Dorsolateral prefrontal cortex (tissue), 120 donors: ENCODE measurements at regions of chr14 and their contacts with region 1.

Region 1: DNA sequence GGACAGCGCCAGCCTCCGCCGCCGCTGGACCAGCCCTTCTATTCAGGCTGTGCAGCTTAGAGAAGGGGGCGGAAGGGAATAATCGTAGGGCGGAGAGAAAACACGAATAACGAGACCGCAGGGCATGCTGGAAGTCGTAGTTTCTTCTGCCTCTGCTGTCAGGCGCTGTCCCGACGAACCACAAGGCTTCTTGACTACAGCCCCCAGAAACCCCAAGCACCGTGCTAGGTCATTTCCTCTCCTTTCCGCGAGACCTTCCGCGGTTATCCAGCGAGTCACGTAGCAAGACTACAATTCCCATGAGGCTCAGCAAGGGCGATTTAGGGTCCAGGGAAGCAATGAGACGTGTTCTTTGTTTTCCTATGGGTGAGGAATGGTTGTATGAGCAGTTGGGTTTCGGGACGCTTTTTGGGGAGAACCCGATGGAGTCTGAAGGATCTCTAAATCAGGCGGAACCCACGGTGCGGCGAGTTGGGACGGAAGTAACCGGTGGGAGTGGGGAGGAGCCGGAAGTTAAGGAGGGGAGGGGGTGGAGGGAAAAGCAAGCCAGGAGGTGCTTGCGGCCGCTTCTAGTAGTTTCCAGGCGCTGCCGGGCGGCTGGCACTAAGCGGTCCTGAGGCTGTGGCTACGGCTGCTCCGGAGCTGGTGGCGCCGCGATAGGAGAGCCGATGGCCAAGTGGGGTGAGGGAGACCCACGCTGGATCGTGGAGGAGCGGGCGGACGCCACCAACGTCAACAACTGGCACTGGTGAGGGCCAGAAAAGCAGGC is at the starts of genes AHSA1 and VIPAS39:
- DNase-seq: peak; percentile 86 to 99 (median 98)
- H3K4me3 ChIP-seq: peak within 1 kb of the TSS; percentile 66 to 100 (median 98)
- H3K27ac ChIP-seq: peak within 1 kb of the TSS; percentile 80 to 100 (median 99)
- H3K27me3 ChIP-seq: no peaks in the 10 kb centered on the region
- CTCF ChIP-seq: peak in 27 of 56 donors; percentile 4 to 53 (median 18)
- total RNA-seq, gene AHSA1: 95.6 to 479 (median 192) TPM
- total RNA-seq, gene VIPAS39: 13.2 to 25.2 (median 19.5) TPM

Region 2: GRCh38 chr14:77151918-77152588 is 305.7 kb before region 1 on chr14:
- intact Hi-C with region 1: loop called (anchors 5 to 10 kb)
- DNase-seq: no peak
- H3K4me3 ChIP-seq: no peak overlapping the region
- H3K27ac ChIP-seq: peak overlapping the region in 12 of 59 donors; percentile 0 to 63 (median 26)
- H3K27me3 ChIP-seq: no peaks in the 10 kb centered on the region
- CTCF ChIP-seq: peak in 53 of 56 donors; percentile 28 to 67 (median 48)

Region 3: DNA sequence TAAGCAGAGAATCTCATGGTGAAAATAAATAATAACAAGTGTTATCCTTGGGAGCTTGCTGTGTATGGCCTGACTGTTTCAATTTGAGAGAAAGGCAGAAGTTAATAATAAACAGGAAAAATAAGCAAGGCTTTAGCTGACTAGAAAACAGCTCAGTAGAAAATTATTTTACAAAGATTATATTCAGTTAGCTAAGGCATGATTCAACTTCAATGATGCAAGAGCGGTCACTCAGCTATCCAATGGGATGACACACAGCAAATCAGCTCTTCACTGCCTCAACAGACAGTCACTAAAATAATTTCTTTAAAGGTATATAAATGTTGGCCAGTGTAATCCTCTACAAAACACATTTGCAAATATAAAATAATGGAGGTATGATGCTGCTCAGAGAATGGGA is 118.3 kb before region 1 on chr14:
- intact Hi-C with region 1: loop called in 1 of 2 experiments (anchors 5 kb)
- DNase-seq: no peak
- H3K4me3 ChIP-seq: no peak overlapping the region
- H3K27ac ChIP-seq: no peak overlapping the region
- H3K27me3 ChIP-seq: no peaks in the 10 kb centered on the region
- CTCF ChIP-seq: no peak

Region 4: GRCh38 chr14:77376771-77377501 is 80.8 kb before region 1 on chr14 and contains the starts of genes SAMD15 and TMED8:
- intact Hi-C with region 1: loop called in 1 of 2 experiments (anchors 2 kb)
- DNase-seq: peak; percentile 69 to 89 (median 82)
- H3K4me3 ChIP-seq: peak within 1 kb of the TSS; percentile 61 to 100 (median 88)
- H3K27ac ChIP-seq: peak within 1 kb of the TSS in 57 of 59 donors; percentile 30 to 95 (median 85)
- H3K27me3 ChIP-seq: no peaks in the 10 kb centered on the region
- CTCF ChIP-seq: peak in 55 of 56 donors; percentile 14 to 68 (median 50)
- total RNA-seq, gene SAMD15: 0.95 to 8.0 (median 3.0) TPM
- total RNA-seq, gene TMED8: 15.9 to 37.9 (median 28.6) TPM

Region 5: DNA sequence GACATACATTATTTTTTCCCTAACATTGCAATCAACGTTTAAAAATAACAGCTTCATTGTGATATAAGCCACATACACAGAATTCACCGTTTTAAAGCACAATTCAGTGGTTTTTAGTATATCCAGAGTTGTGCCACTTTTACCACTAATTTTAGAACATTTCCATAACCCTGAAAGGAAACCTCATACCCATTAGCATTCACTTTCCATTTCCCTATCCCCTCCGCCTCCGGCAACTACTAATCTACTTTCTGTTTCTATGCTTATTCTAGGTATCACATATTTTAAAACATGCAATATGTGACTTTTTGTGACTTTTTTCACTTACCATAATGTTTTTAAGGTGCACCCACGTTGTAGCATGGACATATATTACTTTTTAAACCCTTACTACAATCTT is 96.5 kb after region 1 on chr14:
- intact Hi-C with region 1: loop called (anchors 2 kb)
- DNase-seq: no peak
- H3K4me3 ChIP-seq: peak overlapping the region in 6 of 59 donors; percentile 1 to 34 (median 7)
- H3K27ac ChIP-seq: peak overlapping the region; percentile 19 to 99 (median 91)
- H3K27me3 ChIP-seq: no peaks in the 10 kb centered on the region
- CTCF ChIP-seq: no peak

Region 6: DNA sequence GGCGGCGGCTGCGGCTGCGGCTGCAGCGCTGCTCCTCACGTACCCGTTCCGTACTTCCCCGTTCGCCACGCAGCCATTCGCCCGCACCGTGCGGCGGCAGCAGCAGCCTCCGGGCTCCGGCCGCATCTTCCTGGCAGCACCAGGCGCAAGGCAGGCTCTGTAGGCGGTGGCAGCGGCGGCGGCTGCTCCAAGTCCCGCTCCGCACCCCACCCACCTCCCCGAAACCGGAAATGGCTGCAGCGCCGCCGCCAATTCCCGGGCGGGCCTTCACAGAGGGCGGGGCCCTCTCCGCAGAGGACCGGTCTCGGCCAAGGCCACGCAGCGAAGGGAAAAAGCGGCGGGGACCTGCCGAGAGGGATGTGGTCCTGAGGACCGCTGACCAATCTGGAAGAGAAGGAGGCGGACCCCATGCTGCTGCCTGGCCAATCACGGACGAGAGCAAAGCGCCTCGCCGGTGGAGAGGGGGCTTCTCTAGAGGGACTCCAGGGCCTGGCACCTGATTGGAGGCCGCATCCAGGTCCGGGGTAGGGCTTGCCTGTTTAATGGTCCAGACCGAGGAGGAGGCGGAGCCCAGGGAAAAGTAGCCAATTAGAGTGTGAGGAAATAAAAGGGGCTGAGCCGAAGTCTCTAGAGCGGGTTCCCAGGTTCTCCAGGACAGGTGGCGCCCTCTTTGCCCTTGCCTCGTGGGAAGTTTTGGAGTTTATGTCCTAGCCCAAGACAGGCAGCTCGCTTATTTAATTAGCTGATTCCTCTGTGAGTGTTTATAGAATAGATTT is 158.9 kb after region 1 on chr14 and contains the start of gene SPTLC2:
- intact Hi-C with region 1: loop called (anchors 2 to 5 kb)
- DNase-seq: peak; percentile 98 to 100 (median 100)
- H3K4me3 ChIP-seq: peak within 1 kb of the TSS; percentile 60 to 99 (median 92)
- H3K27ac ChIP-seq: peak within 1 kb of the TSS; percentile 19 to 94 (median 88)
- H3K27me3 ChIP-seq: no peaks in the 10 kb centered on the region
- CTCF ChIP-seq: peak in 46 of 56 donors; percentile 13 to 66 (median 42)
- total RNA-seq, gene SPTLC2: 19.4 to 116 (median 48.8) TPM

Region 7: GRCh38 chr14:77707724-77708408 is 250.2 kb after region 1 on chr14 and contains the starts of genes ALKBH1 and SLIRP:
- intact Hi-C with region 1: loop called (anchors 5 kb)
- DNase-seq: peak; percentile 79 to 94 (median 87)
- H3K4me3 ChIP-seq: peak within 1 kb of the TSS; percentile 75 to 100 (median 94)
- H3K27ac ChIP-seq: peak within 1 kb of the TSS in 50 of 59 donors; percentile 1 to 85 (median 66)
- H3K27me3 ChIP-seq: no peaks in the 10 kb centered on the region
- CTCF ChIP-seq: peak in 31 of 56 donors; percentile 9 to 52 (median 31)
- total RNA-seq, gene ALKBH1: 7.9 to 21.4 (median 12.6) TPM
- total RNA-seq, gene SLIRP: 60.9 to 153 (median 104) TPM